ENCODE measurements at regions of chr18 and their contacts with region 1.

Region 1: GRCh38 chr18:8800449-8800848 is 95.1 kb downstream of the MTCL1 start:
- DNase-seq: peak; percentile 98
- H3K4me3 ChIP-seq: no peak overlapping the region
- H3K27me3 ChIP-seq: no peaks in the 10 kb centered on the region
- CTCF ChIP-seq: no peak

Region 2: GRCh38 chr18:7608781-7609201 is 1191.7 kb before region 1 on chr18:
- CTCF ChIA-PET with region 1: no interaction called
- POLR2A ChIA-PET with region 1: interaction called, 10 read pairs
- DNase-seq: peak; percentile 70
- H3K4me3 ChIP-seq: no peak overlapping the region
- H3K27me3 ChIP-seq: no peaks in the 10 kb centered on the region
- CTCF ChIP-seq: no peak

Region 3: GRCh38 chr18:8741117-8741516 is 59.3 kb before region 1 on chr18:
- CTCF ChIA-PET with region 1: no interaction called
- POLR2A ChIA-PET with region 1: no interaction called
- DNase-seq: no peak
- H3K4me3 ChIP-seq: no peak overlapping the region
- H3K27me3 ChIP-seq: no peaks in the 10 kb centered on the region
- CTCF ChIP-seq: no peak

Region 4: GRCh38 chr18:8816816-8817215 is 16.4 kb after region 1 on chr18:
- CTCF ChIA-PET with region 1: interaction called, 4 read pairs
- POLR2A ChIA-PET with region 1: interaction called, 27 read pairs
- DNase-seq: peak; percentile 42
- H3K4me3 ChIP-seq: no peak overlapping the region
- H3K27me3 ChIP-seq: no peaks in the 10 kb centered on the region
- CTCF ChIP-seq: no peak

Region 5: GRCh38 chr18:8870528-8870927 is 70.1 kb after region 1 on chr18:
- CTCF ChIA-PET with region 1: no interaction called
- POLR2A ChIA-PET with region 1: no interaction called
- DNase-seq: no peak
- H3K4me3 ChIP-seq: no peak overlapping the region
- H3K27me3 ChIP-seq: no peaks in the 10 kb centered on the region
- CTCF ChIP-seq: no peak

Region 6: GRCh38 chr18:8948471-8949149 is 148.2 kb after region 1 on chr18:
- CTCF ChIA-PET with region 1: no interaction called
- POLR2A ChIA-PET with region 1: interaction called, 11 read pairs
- DNase-seq: peak; percentile 81
- H3K4me3 ChIP-seq: peak overlapping the region; percentile 20
- H3K27me3 ChIP-seq: no peaks in the 10 kb centered on the region
- CTCF ChIP-seq: 0 out of 2 replicates have a peak, but pooled peaks have one; percentile 5

Measured in BJ (cell line).